Common myeloid progenitor, CD34-positive (primary cell): ENCODE measurements at regions of chr15 and their contacts with region 1.

Region 1: GRCh38 chr15:63792584-63792983 is 41.2 kb downstream of the HERC1 start:
- DNase-seq: no peak
- H3K4me3 ChIP-seq: no peak overlapping the region
- H3K27ac ChIP-seq: no peak overlapping the region
- H3K4me1 ChIP-seq: peaks cover 0 to 2% (median 1%) of the 10 kb centered on the region in 4 experiments
- H3K27me3 ChIP-seq: no peaks in the 10 kb centered on the region

Region 2: GRCh38 chr15:63805993-63806980 is 13.7 kb after region 1 on chr15:
- CTCF ChIA-PET with region 1: interaction called, 11 read pairs
- POLR2A ChIA-PET with region 1: no interaction called
- DNase-seq: peak in 2 of 3 donors; percentile 26 to 47
- H3K4me3 ChIP-seq: no peak overlapping the region
- H3K27ac ChIP-seq: no peak overlapping the region
- H3K4me1 ChIP-seq: peaks cover 0 to 35% (median 17%) of the 10 kb centered on the region in 4 experiments
- H3K27me3 ChIP-seq: no peaks in the 10 kb centered on the region